Activated CD4-positive, alpha-beta memory T cell treated with anti-CD3 and anti-CD28 coated beads for 36 hours (primary cell): ENCODE measurements at regions of chr2 and their contacts with region 1.

Region 1: GRCh38 chr2:113962692-113963480 is 73.0 kb downstream of the ACTR3 start:
- DNase-seq: no peak
- H3K4me3 Mint-ChIP-seq: no peak overlapping the region
- H3K27ac Mint-ChIP-seq: peak overlapping the region; percentile 4
- H3K4me1 Mint-ChIP-seq: peaks cover 16% of the 10 kb centered on the region
- H3K27me3 Mint-ChIP-seq: no peaks in the 10 kb centered on the region

Region 2: GRCh38 chr2:113896791-113897190 is 66.1 kb before region 1 on chr2:
- CTCF ChIA-PET with region 1: interaction called, 4 read pairs
- POLR2A ChIA-PET with region 1: no interaction called
- intact Hi-C with region 1: loop called (anchors 5 kb)
- DNase-seq: no peak
- H3K4me3 Mint-ChIP-seq: peak overlapping the region; percentile 31
- H3K27ac Mint-ChIP-seq: no peak overlapping the region
- H3K4me1 Mint-ChIP-seq: peaks cover 95% of the 10 kb centered on the region
- H3K27me3 Mint-ChIP-seq: no peaks in the 10 kb centered on the region

Region 3: DNA sequence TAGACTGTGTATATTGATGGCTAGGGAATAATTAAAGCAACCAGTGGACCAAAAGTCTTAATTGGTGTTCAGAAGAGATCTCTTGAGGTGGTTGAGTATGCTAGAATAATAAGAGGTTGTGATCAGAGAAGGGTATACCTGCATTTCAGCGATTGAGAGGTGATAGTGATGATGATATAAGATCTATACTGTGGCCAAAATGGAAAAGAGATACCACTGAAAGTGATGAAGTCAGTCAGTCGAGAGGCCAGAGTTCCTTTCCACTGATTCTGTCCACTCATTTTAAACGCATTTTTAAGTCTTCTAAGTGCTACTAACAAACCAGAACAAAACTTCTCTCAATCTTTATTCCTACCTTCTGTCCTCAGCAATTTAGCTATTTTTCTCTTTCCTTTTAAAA is 40.1 kb before region 1 on chr2:
- CTCF ChIA-PET with region 1: no interaction called
- POLR2A ChIA-PET with region 1: no interaction called
- intact Hi-C with region 1: loop called (anchors 5 kb)
- DNase-seq: no peak
- H3K4me3 Mint-ChIP-seq: no peak overlapping the region
- H3K27ac Mint-ChIP-seq: no peak overlapping the region
- H3K4me1 Mint-ChIP-seq: peaks cover 15% of the 10 kb centered on the region
- H3K27me3 Mint-ChIP-seq: no peaks in the 10 kb centered on the region